Head of caudate nucleus (tissue), 42 donors: ENCODE measurements at regions of chr10 and their contacts with region 1.

Region 1: GRCh38 chr10:33453081-33454025 is 118.9 kb upstream of the NRP1 start:
- DNase-seq: no peak

Region 2: GRCh38 chr10:33204049-33204448 is 249.3 kb before region 1 on chr10:
- intact Hi-C with region 1: loop called (anchors 10 kb)
- DNase-seq: no peak